ENCODE measurements at regions of chr6 and their contacts with region 1.

Region 1: DNA sequence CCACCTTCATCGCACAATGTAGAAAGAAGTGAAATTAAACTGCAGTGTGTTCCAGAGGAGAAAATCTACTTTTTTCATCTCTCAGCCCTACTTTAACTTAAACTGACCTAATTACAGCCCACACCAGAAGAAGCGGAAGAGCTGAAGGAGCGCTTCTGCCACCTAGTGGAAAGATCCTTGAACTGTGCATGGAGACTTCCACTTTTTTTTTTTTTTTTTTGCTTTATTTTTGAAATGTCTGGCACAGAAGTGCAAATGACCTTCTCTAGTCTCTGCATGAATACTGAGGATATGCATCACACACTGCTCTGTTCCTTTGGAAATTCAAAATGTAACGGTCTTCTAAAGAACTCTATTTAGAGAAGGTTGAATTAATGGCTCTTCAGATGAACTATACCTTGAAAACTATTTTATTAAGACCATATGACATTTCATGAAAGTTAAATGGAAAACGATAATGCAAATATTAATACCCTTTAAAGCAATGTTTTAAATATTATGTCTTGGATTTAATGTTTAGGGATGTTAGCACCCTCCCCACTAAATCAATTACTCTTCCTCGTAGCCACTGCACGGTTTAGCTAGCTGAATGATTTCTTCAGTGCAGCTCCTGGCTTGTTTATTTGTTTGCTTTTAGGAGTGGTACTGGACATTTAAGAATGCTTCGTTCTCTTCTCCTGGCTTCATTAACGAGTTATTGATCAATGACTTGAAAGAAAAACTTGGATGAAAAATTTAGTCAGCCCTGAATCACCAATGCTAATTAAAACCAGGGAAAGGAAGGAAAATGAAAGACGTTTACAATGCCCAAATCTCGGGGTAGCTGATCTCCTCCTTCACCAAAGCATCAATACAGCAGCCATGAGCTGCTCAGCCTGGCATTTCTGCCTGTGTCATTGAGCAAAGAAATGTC is 569.6 kb upstream of the GJE1 start:
- DNase-seq: peak in 1 of 2 donors; percentile 35
- H3K4me3 ChIP-seq: peak overlapping the region; percentile 19 to 59 (median 34)
- H3K27ac ChIP-seq: peak overlapping the region; percentile 50 to 85
- H3K4me1 ChIP-seq: no peaks in the 10 kb centered on the region
- H3K27me3 ChIP-seq: no peaks in the 10 kb centered on the region
- CTCF ChIP-seq: peak; percentile 78 to 86 (median 84)
- POLR2A ChIP-seq: no peak

Region 2: DNA sequence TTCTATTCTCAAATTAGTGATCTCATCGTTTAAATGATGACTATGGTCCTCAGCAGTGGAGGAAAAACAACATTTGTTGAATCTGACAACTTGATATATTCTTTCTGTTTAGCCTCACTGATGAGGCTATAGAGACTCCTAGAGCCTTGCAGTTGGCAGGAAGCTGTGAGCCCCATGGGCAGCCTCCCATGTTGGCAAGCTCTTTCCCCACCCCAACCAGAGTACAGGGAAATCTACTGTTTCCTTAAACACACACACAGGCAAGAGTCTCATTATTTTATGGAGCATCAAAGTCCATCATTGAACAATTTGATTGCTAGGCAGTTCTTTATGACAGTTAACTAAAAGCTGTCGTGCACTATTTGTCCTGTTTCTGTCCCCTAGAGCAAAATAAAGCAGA is 1690.4 kb before region 1 on chr6:
- intact Hi-C with region 1: loop called (anchors 5 kb)
- DNase-seq: no peak
- H3K4me3 ChIP-seq: no peak overlapping the region
- H3K27ac ChIP-seq: no peak overlapping the region
- H3K4me1 ChIP-seq: no peaks in the 10 kb centered on the region
- H3K27me3 ChIP-seq: no peaks in the 10 kb centered on the region
- CTCF ChIP-seq: no peak
- POLR2A ChIP-seq: no peak

Region 3: GRCh38 chr6:141229296-141229695 is 333.8 kb before region 1 on chr6:
- intact Hi-C with region 1: no loop called
- DNase-seq: no peak
- H3K4me3 ChIP-seq: no peak overlapping the region
- H3K27ac ChIP-seq: no peak overlapping the region
- H3K4me1 ChIP-seq: no peaks in the 10 kb centered on the region
- H3K27me3 ChIP-seq: no peaks in the 10 kb centered on the region
- CTCF ChIP-seq: no peak
- POLR2A ChIP-seq: no peak